ENCODE measurements at regions of chr17 and their contacts with region 1.

Region 1: GRCh38 chr17:17122781-17123483 is 80.7 kb downstream of the MPRIP start:
- DNase-seq: no peak
- H3K4me3 ChIP-seq: no peak overlapping the region
- H3K27ac ChIP-seq: no peak overlapping the region
- H3K27me3 ChIP-seq: no peaks in the 10 kb centered on the region
- CTCF ChIP-seq: no peak

Region 2: GRCh38 chr17:17141860-17142552 is 19.1 kb after region 1 on chr17:
- CTCF ChIA-PET with region 1: interaction called, 10 read pairs
- POLR2A ChIA-PET with region 1: interaction called, 5 read pairs
- DNase-seq: no peak
- H3K4me3 ChIP-seq: no peak overlapping the region
- H3K27ac ChIP-seq: no peak overlapping the region
- H3K27me3 ChIP-seq: no peaks in the 10 kb centered on the region
- CTCF ChIP-seq: peak; percentile 91

Region 3: DNA sequence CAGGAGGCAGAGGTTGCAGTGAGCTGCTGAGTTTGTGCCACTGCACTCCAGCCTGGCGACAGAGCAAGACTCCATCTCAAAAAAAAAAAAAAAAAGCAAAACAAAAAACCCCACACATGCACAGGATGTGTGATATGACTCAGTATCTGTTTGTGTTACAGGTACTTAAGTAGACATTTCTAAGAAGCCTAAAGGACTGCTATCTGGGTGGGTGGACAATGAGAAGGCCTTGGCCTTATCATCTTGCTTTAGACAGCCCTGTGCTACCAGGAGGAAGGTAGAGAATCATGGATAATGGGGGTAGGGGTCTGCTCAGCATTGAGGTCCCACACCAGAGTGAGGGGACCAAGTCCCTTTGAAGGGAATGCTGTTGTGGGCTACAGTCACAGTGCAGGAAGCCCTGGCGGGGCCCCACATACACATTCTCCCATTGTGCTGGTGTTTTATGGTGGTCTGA is 56.5 kb after region 1 on chr17:
- CTCF ChIA-PET with region 1: no interaction called
- POLR2A ChIA-PET with region 1: no interaction called
- DNase-seq: no peak
- H3K4me3 ChIP-seq: no peak overlapping the region
- H3K27ac ChIP-seq: no peak overlapping the region
- H3K27me3 ChIP-seq: no peaks in the 10 kb centered on the region
- CTCF ChIP-seq: no peak

Measured in AG04450 (cell line).